CD4-positive, alpha-beta T cell (primary cell): ENCODE measurements at regions of chr11 and their contacts with region 1.

Region 1: GRCh38 chr11:21195995-21196394 is 526.6 kb downstream of the NELL1 start:
- DNase-seq: no peak
- ATAC-seq: no peak
- H3K4me3 ChIP-seq: no peak overlapping the region
- H3K4me3 Mint-ChIP-seq: no peak overlapping the region
- H3K27ac ChIP-seq: no peak overlapping the region
- H3K27ac Mint-ChIP-seq: no peak overlapping the region
- H3K4me1 ChIP-seq: no peaks in the 10 kb centered on the region
- H3K4me1 Mint-ChIP-seq: no peaks in the 10 kb centered on the region
- H3K27me3 ChIP-seq: no peaks in the 10 kb centered on the region
- H3K27me3 Mint-ChIP-seq: no peaks in the 10 kb centered on the region
- CTCF ChIP-seq: no peak

Region 2: GRCh38 chr11:21121991-21122390 is 74.0 kb before region 1 on chr11:
- CTCF ChIA-PET with region 1: no interaction called
- POLR2A ChIA-PET with region 1: no interaction called
- intact Hi-C with region 1: loop called in 1 of 2 experiments (anchors 10 kb)
- DNase-seq: no peak
- ATAC-seq: no peak
- H3K4me3 ChIP-seq: no peak overlapping the region
- H3K4me3 Mint-ChIP-seq: no peak overlapping the region
- H3K27ac ChIP-seq: no peak overlapping the region
- H3K27ac Mint-ChIP-seq: no peak overlapping the region
- H3K4me1 ChIP-seq: no peaks in the 10 kb centered on the region
- H3K4me1 Mint-ChIP-seq: no peaks in the 10 kb centered on the region
- H3K27me3 ChIP-seq: no peaks in the 10 kb centered on the region
- H3K27me3 Mint-ChIP-seq: no peaks in the 10 kb centered on the region
- CTCF ChIP-seq: no peak